Panc1 (cell line): ENCODE measurements at regions of chr5 and their contacts with region 1.

Region 1: GRCh38 chr5:40879163-40879942 is 29.9 kb upstream of the C7 start:
- DNase-seq: peak; percentile 38
- ATAC-seq: peak; percentile 74; the same call in 1 of the 2 replicates
- H3K4me3 ChIP-seq: no peak overlapping the region
- H3K27ac ChIP-seq: no peak overlapping the region
- H3K4me1 ChIP-seq: no peaks in the 10 kb centered on the region; the same call in 1 of the 2 replicates
- H3K27me3 ChIP-seq: no peaks in the 10 kb centered on the region
- CTCF ChIP-seq: peak; percentile 64; the same call in 1 of the 2 replicates

Region 2: DNA sequence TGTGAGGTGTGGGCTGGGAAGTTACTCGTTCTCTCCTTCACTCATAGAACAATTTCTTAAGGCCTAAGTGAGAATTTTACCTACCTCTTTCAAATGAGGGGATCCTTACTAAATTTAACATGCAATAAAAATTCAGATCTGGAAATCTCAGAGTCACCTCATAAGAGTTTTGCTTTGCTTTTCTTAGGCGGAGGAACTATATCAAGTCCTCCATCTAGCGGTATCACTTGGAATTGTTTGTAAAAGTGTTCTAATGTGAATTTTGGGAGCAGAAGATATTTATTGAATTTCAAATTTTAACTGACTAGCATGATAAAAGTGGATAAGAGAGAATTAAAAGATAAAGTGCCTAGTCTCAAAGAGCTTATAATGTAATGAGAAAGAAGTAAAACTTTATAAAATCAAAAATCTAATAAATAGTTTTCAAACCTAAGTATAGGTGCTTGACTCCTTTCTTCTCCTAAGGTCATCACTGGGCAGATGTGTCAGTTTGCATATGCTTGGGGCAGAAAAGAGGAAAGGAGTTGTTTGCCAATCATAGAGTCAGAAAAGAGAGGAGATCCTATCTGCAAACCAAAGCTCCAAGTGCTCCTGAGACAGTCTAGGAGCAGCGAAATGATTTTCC is 1308.8 kb before region 1 on chr5:
- CTCF ChIA-PET with region 1: no interaction called
- POLR2A ChIA-PET with region 1: no interaction called
- in situ Hi-C with region 1: no loop called
- intact Hi-C with region 1: loop called (anchors 10 kb)
- DNase-seq: peak; percentile 35
- ATAC-seq: no peak
- H3K4me3 ChIP-seq: no peak overlapping the region
- H3K27ac ChIP-seq: no peak overlapping the region
- H3K4me1 ChIP-seq: no peaks in the 10 kb centered on the region
- H3K27me3 ChIP-seq: peaks cover 15% of the 10 kb centered on the region
- CTCF ChIP-seq: peak; percentile 71; the same call in 1 of the 2 replicates

Region 3: DNA sequence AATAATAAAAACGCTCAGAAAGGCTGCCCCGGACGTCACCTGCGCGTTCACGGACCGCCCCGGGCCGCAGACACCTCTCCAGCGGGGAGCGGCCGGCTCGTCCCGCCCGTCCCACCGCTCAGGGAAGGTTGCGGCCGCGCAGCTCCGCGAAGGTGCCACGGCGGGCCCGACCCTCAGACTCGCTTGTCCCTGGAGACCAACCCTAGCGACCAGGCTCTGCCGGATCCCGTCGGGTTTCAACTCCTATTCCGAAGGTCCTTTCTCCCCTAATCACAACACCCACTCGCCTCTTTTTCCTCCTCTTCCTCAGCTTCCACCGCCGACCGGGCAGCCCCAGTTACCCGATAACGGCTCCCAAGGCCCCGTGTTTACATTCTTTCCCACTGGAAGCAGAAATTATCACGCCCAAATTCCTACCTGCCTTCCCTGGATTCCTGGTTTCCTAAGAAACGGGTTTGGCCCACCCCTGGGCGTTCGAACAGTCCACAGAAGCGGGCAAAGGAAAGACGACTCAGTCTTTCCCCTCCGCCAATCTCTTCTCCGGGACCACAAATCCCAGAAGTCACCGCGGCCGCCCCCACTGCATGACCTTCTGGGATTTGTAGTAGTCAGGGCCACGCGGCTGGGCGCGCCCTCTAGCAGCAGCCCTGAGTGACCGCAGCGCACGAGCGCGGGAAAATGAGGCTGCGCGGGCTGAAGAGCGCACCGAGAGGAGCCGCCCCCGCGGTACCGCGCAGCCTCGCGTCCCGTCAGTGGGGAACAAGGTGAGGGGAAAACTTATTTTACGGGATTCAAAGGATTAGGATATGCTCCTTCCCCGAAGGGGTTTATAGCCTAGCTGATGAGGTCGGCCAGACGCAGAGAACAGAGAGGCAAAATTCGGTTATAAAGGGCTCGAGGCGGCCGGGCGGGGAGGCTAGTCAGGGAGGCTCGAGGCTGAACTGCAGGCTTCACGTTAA is 123.7 kb before region 1 on chr5 and contains the start of gene TTC33:
- CTCF ChIA-PET with region 1: no interaction called
- POLR2A ChIA-PET with region 1: interaction called, 6 read pairs
- in situ Hi-C with region 1: no loop called
- intact Hi-C with region 1: loop called (anchors 5 kb)
- DNase-seq: peak; percentile 81
- ATAC-seq: peak; percentile 96
- H3K4me3 ChIP-seq: peak within 1 kb of the TSS; percentile 90 to 93
- H3K27ac ChIP-seq: peak within 1 kb of the TSS; percentile 88
- H3K4me1 ChIP-seq: peaks cover 9% of the 10 kb centered on the region
- H3K27me3 ChIP-seq: no peaks in the 10 kb centered on the region
- CTCF ChIP-seq: peak; percentile 86
- total RNA-seq, gene TTC33: 12.6 TPM

Region 4: DNA sequence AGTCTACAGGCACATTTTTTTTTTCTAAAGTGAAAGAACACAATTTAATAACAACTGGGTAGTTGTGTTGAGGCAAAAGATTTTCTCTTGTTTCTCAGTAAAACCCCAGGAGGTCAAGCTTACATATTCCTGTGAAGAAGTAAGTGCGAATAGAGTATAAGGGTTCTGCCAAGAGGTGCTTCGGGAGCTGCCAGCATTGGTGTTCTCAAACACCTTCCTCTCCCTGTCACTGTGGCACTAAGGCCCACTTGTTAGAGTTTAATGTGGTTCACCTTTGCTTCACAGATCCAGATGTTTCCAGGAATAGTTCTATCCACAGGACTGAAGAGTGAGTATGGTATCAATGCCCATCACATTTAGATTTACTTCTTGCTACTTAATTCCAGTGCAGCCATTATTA is 425.7 kb after region 1 on chr5:
- CTCF ChIA-PET with region 1: no interaction called
- POLR2A ChIA-PET with region 1: no interaction called
- in situ Hi-C with region 1: no loop called
- intact Hi-C with region 1: no loop called
- DNase-seq: no peak
- ATAC-seq: no peak
- H3K4me3 ChIP-seq: no peak overlapping the region
- H3K27ac ChIP-seq: no peak overlapping the region
- H3K4me1 ChIP-seq: no peaks in the 10 kb centered on the region
- H3K27me3 ChIP-seq: no peaks in the 10 kb centered on the region
- CTCF ChIP-seq: no peak